Psoas muscle (tissue), 8 donors: ENCODE measurements at regions of chr2 and their contacts with region 1.

Region 1: GRCh38 chr2:237858294-237859081 is 935 bp upstream of the RAMP1 start:
- DNase-seq: peak; percentile 70 to 80
- ATAC-seq: peak; percentile 82 to 88 (median 86)
- H3K4me3 ChIP-seq: peak overlapping the region; percentile 83
- H3K27ac ChIP-seq: peak overlapping the region; percentile 93
- H3K4me1 ChIP-seq: peaks cover 22% of the 10 kb centered on the region
- H3K27me3 ChIP-seq: peaks cover 0 to 2% (median 0%) of the 10 kb centered on the region in 3 donors
- CTCF ChIP-seq: peak; percentile 81

Region 2: GRCh38 chr2:237923481-237924163 is 65.1 kb after region 1 on chr2:
- intact Hi-C with region 1: loop called in 1 of 2 experiments (anchors 2 kb)
- DNase-seq: peak; percentile 79 to 89
- ATAC-seq: peak; percentile 82 to 96 (median 92)
- H3K4me3 ChIP-seq: peak overlapping the region; percentile 54
- H3K27ac ChIP-seq: peak overlapping the region; percentile 56
- H3K4me1 ChIP-seq: no peaks in the 10 kb centered on the region
- H3K27me3 ChIP-seq: no peaks in the 10 kb centered on the region
- CTCF ChIP-seq: peak; percentile 98

Region 3: DNA sequence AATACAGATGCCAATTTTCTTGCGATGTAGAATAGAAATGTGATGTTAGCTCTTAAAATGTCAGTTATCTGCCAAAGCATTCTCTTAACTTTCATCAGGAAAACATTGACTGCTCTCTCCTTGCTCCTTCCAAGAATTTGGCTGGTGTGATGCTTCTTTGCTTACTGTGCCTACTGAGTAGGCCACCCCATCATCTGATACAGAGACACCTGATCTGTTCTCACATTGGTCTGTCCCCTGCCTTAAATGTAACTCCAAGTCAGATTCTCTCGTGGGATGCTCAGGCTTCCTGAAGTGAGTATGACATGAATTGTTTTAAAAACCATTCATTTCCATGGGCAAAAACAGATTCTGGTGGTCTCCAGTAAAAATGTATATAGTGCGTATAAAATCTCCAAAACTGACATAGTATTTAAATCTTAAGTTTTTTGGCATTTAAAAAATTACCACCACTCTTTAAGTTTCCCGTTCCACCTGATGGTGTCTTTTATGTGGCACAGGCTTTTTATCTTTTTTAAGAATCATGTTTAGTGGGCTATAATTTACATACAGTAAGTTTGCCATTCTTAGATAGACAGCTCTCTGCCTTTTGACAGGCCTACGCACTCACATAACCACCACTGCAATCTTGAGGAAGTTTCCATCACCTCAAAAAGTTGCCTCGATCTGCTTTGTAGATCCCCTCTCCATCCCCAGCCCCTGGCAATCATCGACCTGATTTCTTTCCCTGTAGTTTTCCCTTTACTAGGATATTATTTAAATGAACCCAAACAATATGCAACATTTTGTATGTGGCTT is 144.9 kb after region 1 on chr2:
- intact Hi-C with region 1: no loop called
- DNase-seq: no peak
- ATAC-seq: no peak
- H3K4me3 ChIP-seq: no peak overlapping the region
- H3K27ac ChIP-seq: no peak overlapping the region
- H3K4me1 ChIP-seq: no peaks in the 10 kb centered on the region
- H3K27me3 ChIP-seq: no peaks in the 10 kb centered on the region
- CTCF ChIP-seq: no peak

Region 4: GRCh38 chr2:238015705-238016104 is 157.2 kb after region 1 on chr2:
- intact Hi-C with region 1: loop called in 1 of 2 experiments (anchors 5 kb)
- DNase-seq: no peak
- ATAC-seq: no peak
- H3K4me3 ChIP-seq: no peak overlapping the region
- H3K27ac ChIP-seq: no peak overlapping the region
- H3K4me1 ChIP-seq: peaks cover 4% of the 10 kb centered on the region
- H3K27me3 ChIP-seq: no peaks in the 10 kb centered on the region
- CTCF ChIP-seq: no peak

Region 5: GRCh38 chr2:238139196-238140039 is 280.9 kb after region 1 on chr2:
- intact Hi-C with region 1: loop called (anchors 2 to 10 kb)
- DNase-seq: peak in 1 of 2 donors; percentile 80
- ATAC-seq: peak; percentile 22 to 39 (median 30)
- H3K4me3 ChIP-seq: peak overlapping the region; percentile 83
- H3K27ac ChIP-seq: peak overlapping the region; percentile 99
- H3K4me1 ChIP-seq: peaks cover 56% of the 10 kb centered on the region
- H3K27me3 ChIP-seq: no peaks in the 10 kb centered on the region
- CTCF ChIP-seq: peak; percentile 75